ENCODE measurements at regions of chr12 and their contacts with region 1.

Region 1: DNA sequence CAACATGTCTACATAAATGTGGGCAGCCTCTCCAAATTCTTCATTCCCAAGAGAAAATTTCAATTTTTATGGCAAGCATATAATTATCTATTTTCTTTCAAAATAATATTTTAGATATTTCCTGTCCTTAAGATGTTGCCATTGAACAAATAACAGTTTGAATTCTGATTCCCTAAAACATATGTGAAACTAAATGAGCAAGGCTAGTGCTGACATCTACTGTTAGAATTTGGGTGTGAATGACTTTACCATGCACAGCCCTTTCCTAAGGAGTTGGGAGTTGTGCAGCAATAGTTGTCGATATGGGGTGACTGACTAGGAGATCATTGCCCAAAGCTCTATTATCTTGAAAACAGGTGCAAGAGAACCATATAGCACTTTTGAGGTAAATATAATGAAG is 108.2 kb upstream of the SLC38A4 start:
- DNase-seq: no peak
- H3K4me3 ChIP-seq: no peak overlapping the region
- H3K27ac ChIP-seq: no peak overlapping the region
- H3K4me1 ChIP-seq: no peaks in the 10 kb centered on the region
- H3K27me3 ChIP-seq: no peaks in the 10 kb centered on the region
- CTCF ChIP-seq: peak in 3 of 4 experiments; percentile 19 to 60 (median 48)
- POLR2A ChIP-seq: no peak

Region 2: GRCh38 chr12:46124848-46125619 is 808.9 kb before region 1 on chr12:
- intact Hi-C with region 1: loop called (anchors 10 kb)
- DNase-seq: peak; percentile 52
- H3K4me3 ChIP-seq: no peak overlapping the region
- H3K27ac ChIP-seq: no peak overlapping the region
- H3K4me1 ChIP-seq: no peaks in the 10 kb centered on the region
- H3K27me3 ChIP-seq: no peaks in the 10 kb centered on the region
- CTCF ChIP-seq: peak; percentile 57 to 80 (median 76)
- POLR2A ChIP-seq: no peak

Region 3: DNA sequence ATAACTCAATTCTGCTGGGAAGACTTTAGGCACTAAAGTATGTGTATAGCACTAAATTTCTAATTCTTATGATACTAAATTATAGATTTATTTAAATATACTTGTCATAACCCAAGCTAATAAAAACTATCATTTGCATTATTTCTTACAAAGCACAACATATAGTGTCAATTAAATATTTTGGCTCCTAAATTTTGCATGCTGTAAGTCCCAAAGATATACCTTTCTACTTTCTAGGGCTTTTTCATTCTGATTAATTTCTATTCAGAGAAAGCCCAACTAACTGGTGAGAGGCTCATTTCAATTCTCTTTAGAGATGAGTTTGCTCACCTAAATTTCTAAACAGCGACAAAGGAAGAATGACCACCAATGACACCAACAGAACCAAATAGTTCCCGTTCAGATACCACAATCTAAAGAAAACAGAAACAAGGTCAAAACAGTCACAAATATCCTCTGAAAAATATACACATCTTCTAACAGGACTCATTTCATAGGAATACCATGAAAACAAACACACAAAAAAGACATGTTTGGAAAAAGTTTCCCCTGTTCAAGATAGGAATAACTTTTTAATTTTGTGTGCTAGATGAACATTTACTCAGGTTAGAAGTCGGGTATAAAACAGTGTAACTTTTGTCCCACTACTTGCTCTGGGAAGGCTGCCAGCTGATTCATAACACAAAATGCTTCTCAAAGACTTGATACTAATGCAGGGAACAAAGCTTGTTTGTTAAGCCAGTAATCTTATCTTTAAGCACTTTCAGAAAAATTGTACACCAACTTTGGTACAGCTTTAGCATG is 569.0 kb before region 1 on chr12:
- intact Hi-C with region 1: loop called (anchors 10 kb)
- DNase-seq: peak; percentile 58
- H3K4me3 ChIP-seq: no peak overlapping the region
- H3K27ac ChIP-seq: no peak overlapping the region
- H3K4me1 ChIP-seq: peaks cover 23% of the 10 kb centered on the region
- H3K27me3 ChIP-seq: no peaks in the 10 kb centered on the region
- CTCF ChIP-seq: no peak
- POLR2A ChIP-seq: no peak

Region 4: GRCh38 chr12:46675736-46676135 is 258.2 kb before region 1 on chr12:
- intact Hi-C with region 1: loop called (anchors 5 kb)
- DNase-seq: no peak
- H3K4me3 ChIP-seq: no peak overlapping the region
- H3K27ac ChIP-seq: no peak overlapping the region
- H3K4me1 ChIP-seq: no peaks in the 10 kb centered on the region
- H3K27me3 ChIP-seq: no peaks in the 10 kb centered on the region
- CTCF ChIP-seq: peak; percentile 19 to 54 (median 52)
- POLR2A ChIP-seq: no peak

Region 5: GRCh38 chr12:46915082-46915481 is 18.9 kb before region 1 on chr12:
- intact Hi-C with region 1: no loop called
- DNase-seq: no peak
- H3K4me3 ChIP-seq: no peak overlapping the region
- H3K27ac ChIP-seq: no peak overlapping the region
- H3K4me1 ChIP-seq: no peaks in the 10 kb centered on the region
- H3K27me3 ChIP-seq: no peaks in the 10 kb centered on the region
- CTCF ChIP-seq: no peak
- POLR2A ChIP-seq: no peak

Region 6: DNA sequence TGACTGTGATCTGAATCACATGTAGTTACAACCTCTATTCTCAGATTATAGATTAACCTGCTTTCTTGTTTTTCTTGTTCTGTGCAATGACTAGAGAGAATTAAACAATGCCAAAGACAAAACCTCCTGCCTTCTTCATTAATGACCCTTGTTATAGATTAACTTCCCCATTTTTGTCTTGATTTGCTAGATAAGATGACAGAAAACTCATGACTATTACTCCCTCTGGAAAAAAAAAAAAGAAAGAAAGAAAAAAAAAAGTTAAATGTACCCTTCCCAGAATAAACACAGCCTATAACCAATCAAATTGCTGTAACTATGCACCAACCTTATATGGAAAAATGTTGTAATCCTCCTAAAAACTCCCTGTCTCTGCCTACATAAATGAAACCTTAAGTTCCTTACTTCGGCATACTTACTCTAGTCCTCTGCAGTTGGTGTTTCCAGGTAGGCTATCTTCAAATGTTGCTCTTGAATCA is 104.4 kb after region 1 on chr12:
- intact Hi-C with region 1: no loop called
- DNase-seq: no peak
- H3K4me3 ChIP-seq: no peak overlapping the region
- H3K27ac ChIP-seq: no peak overlapping the region
- H3K4me1 ChIP-seq: no peaks in the 10 kb centered on the region
- H3K27me3 ChIP-seq: no peaks in the 10 kb centered on the region
- CTCF ChIP-seq: no peak
- POLR2A ChIP-seq: peak; percentile 26

Measured in prostate gland (tissue), 2 donors.